ENCODE measurements at regions of chr1 and their contacts with region 1.

Region 1: DNA sequence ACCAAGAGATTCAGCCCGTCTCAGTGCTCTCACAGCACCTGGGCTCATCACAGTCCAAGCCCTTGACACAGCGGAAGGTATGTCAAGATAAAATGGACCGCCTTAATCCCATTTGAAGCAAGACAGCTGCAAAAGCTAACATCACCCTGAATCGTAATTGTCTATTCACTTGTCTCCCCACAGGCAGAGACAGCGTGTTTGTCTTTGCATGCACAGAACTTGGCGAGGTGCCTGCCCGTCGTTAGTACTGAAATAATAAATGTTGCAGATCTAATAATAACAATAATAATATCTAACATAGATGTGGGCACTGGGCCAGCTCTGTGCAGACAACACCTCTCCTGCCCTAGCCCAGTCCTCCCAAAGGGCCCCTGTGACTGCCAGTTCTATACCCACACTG is 271.7 kb downstream of the NPHP4 start:
- DNase-seq: peak; percentile 74
- H3K27ac ChIP-seq: peak overlapping the region; percentile 72
- CTCF ChIP-seq: no peak

Region 2: GRCh38 chr1:5651964-5652821 is 68.3 kb before region 1 on chr1:
- CTCF ChIA-PET with region 1: no interaction called
- POLR2A ChIA-PET with region 1: interaction called, 12 read pairs
- DNase-seq: peak; percentile 78
- H3K27ac ChIP-seq: peak overlapping the region; percentile 96
- CTCF ChIP-seq: no peak

Region 3: GRCh38 chr1:5739561-5740078 is 19.1 kb after region 1 on chr1:
- CTCF ChIA-PET with region 1: no interaction called
- POLR2A ChIA-PET with region 1: no interaction called
- DNase-seq: no peak
- H3K27ac ChIP-seq: no peak overlapping the region
- CTCF ChIP-seq: no peak

Measured in RWPE1 (cell line).